HCT116 (cell line): ENCODE measurements at regions of chr20 and their contacts with region 1.

Region 1: GRCh38 chr20:51029963-51030920 is 7.3 kb upstream of the KCNG1 start:
- DNase-seq: no peak
- ATAC-seq: no peak
- H3K4me3 ChIP-seq: no peak overlapping the region
- H3K27ac ChIP-seq: no peak overlapping the region
- H3K4me1 ChIP-seq: peaks cover 10 to 17% of the 10 kb centered on the region in 2 experiments; a peak in 3 of 4 replicates
- H3K27me3 ChIP-seq: peaks cover 41% of the 10 kb centered on the region
- CTCF ChIP-seq: no peak
- POLR2A ChIP-seq: no peak
- RAD21 ChIP-seq: no peak

Region 2: GRCh38 chr20:51014797-51015722 is 15.2 kb before region 1 on chr20:
- CTCF ChIA-PET with region 1: interaction called, 15 read pairs
- POLR2A ChIA-PET with region 1: interaction called, 4 read pairs
- RAD21 ChIA-PET with region 1: no interaction called
- intact Hi-C with region 1: no loop called
- DNase-seq: no peak
- ATAC-seq: peak; percentile 93
- H3K4me3 ChIP-seq: no peak overlapping the region
- H3K27ac ChIP-seq: no peak overlapping the region
- H3K4me1 ChIP-seq: no peaks in the 10 kb centered on the region
- H3K27me3 ChIP-seq: no peaks in the 10 kb centered on the region
- CTCF ChIP-seq: peak; percentile 43 to 92 (median 83); a peak in 5 of 6 replicates
- POLR2A ChIP-seq: no peak
- RAD21 ChIP-seq: peak; percentile 71